ENCODE measurements at regions of chr16 and their contacts with region 1.

Region 1: DNA sequence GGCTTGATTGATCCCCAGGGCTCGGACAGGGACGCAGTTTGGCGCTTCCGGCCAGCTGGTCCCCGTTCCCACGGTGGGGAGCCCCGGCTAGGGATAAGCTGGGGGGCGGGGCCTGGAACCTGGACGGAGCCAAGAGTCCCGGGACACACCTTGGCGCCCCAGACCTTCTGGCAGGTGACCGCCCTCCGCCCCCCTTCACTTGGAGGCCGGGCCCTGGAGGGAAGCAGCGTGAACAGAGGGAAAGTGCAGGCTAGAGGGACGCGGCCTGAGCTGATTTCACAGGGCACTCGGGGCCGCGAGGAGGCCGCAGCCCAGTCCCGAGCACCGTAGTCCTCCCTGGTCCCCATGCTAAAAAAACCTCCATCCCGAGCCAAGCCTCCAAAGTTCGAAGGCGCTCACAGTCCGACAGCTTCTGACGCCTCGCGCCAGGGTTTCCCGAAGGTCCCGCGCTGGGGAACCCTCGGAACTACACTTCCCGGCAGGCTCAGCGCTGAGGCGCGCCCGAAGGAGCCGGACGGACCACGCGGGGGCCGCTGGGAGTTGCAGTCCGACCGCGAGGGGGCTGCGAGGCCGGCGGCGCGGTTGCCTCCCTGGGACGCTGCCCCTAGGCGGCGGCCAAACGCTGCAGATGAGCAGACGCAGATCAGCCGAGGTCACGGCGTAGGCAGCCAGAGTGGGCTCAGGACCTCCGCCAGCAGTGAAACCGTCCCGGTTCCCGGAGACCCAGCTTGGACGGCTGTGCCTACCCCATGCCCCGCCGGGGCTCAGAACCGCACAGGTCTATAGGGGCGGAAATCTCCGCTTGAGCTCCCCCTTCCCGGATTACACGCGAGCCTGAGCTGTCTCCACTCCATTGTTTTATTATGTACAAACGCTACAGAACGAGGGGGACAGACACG is at the start of gene TBX6:
- DNase-seq: peak; percentile 99
- total RNA-seq, gene TBX6: 0.46 to 0.57 TPM

Region 2: GRCh38 chr16:29290631-29291247 is 801.0 kb before region 1 on chr16:
- intact Hi-C with region 1: loop called in 1 of 2 experiments (anchors 5 kb)
- DNase-seq: peak; percentile 99

Region 3: GRCh38 chr16:30110661-30111060 is 18.9 kb after region 1 on chr16:
- intact Hi-C with region 1: loop called in 1 of 2 experiments (anchors 1 kb)
- DNase-seq: no peak

Region 4: GRCh38 chr16:30173054-30173453 is 81.3 kb after region 1 on chr16:
- intact Hi-C with region 1: no loop called
- DNase-seq: no peak